GM23248 (cell line): ENCODE measurements at regions of chr4 and their contacts with region 1.

Region 1: GRCh38 chr4:165096776-165097175 is 15.9 kb downstream of the TMEM192 start:
- DNase-seq: peak; percentile 56
- H3K4me3 ChIP-seq: no peak overlapping the region
- H3K27ac ChIP-seq: no peak overlapping the region
- H3K4me1 ChIP-seq: no peaks in the 10 kb centered on the region
- H3K27me3 ChIP-seq: no peaks in the 10 kb centered on the region

Region 2: GRCh38 chr4:164779811-164780216 is 317.0 kb before region 1 on chr4:
- in situ Hi-C with region 1: loop called (anchors 10 kb)
- DNase-seq: peak; percentile 80
- H3K4me3 ChIP-seq: peak overlapping the region; percentile 21
- H3K27ac ChIP-seq: peak overlapping the region; percentile 80
- H3K4me1 ChIP-seq: peaks cover 27% of the 10 kb centered on the region
- H3K27me3 ChIP-seq: no peaks in the 10 kb centered on the region